Activated CD8-positive, alpha-beta T cell treated with anti-CD3 and anti-CD28 coated beads, Interleukin-2, amount 10 ng/mL, durations not matched to agents 7 days and 5 days (primary cell): ENCODE measurements at regions of chr12 and their contacts with region 1.

Region 1: GRCh38 chr12:49342066-49342913 is 4.4 kb upstream of the DNAJC22 start:
- DNase-seq: peak; percentile 84
- ATAC-seq: peak; percentile 73
- H3K4me3 Mint-ChIP-seq: peak overlapping the region; percentile 34
- H3K27ac Mint-ChIP-seq: no peak overlapping the region
- H3K4me1 Mint-ChIP-seq: peaks cover 39% of the 10 kb centered on the region
- H3K27me3 Mint-ChIP-seq: peaks cover 88% of the 10 kb centered on the region

Region 2: DNA sequence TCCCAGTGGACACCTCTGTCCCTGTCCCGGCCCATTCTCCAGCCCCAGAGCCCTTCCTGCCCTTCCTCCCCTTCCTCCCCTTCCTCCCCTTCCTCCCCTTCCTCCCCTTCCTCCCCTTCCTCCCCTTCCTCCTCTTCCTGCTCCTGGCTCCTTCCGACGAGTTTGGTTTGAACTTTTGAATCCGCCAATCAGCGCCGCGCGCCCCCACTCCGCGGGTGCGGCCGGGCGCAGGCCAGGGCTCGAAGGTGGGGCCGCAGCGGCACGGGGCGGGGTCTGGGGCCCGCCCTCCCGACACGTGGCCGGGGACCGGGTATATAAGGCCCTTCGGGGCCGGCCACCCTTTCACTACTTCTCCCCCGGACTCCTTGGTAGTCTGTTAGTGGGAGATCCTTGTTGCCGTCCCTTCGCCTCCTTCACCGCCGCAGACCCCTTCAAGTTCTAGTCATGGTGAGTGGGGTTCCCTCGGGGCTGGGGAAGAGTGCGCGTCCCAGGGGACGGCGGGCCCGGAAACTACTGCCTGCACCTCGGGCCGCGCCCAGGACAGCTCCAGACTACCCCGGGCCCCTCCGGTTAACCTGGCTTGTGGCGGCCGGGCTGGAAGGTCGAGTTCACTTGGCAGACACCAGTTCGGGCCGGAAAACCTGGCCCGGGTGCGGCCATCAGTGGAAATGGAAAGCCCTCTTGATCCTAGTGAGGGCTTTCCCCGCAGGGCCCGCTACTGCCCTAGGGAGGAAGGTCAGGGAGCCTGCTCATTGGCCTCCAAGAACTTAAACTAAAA is 77.4 kb before region 1 on chr12 and contains the start of gene TUBA1C:
- CTCF ChIA-PET with region 1: interaction called, 18 read pairs
- POLR2A ChIA-PET with region 1: interaction called, 3 read pairs
- DNase-seq: peak; percentile 94
- ATAC-seq: peak; percentile 88
- H3K4me3 Mint-ChIP-seq: peak within 1 kb of the TSS; percentile 99
- H3K27ac Mint-ChIP-seq: peak within 1 kb of the TSS; percentile 99
- H3K4me1 Mint-ChIP-seq: peaks cover 47% of the 10 kb centered on the region
- H3K27me3 Mint-ChIP-seq: no peaks in the 10 kb centered on the region
- total RNA-seq, gene TUBA1C: 308 to 324 TPM

Region 3: DNA sequence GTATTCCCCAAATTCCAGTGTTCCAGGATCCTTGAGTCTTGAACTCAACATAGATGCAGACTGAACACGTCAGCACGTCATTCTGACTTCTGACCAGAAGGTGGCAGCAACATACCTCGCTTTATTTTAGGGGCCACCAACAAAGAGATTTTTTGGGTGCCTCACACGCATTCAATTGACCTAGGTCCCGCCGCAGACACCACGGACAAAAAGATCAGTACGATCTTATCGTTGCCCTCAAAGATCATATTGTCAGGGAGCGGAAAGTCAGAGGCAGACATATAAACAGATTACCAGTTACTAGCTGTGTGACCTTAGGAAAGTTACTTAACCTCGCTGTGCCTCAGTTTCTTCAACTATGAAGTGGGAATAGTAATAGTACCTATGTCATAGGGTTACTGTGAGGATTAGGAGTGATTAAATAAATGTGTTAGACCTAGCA is 53.9 kb before region 1 on chr12:
- CTCF ChIA-PET with region 1: interaction called, 111 read pairs
- POLR2A ChIA-PET with region 1: no interaction called
- DNase-seq: peak; percentile 82
- ATAC-seq: peak; percentile 59
- H3K4me3 Mint-ChIP-seq: no peak overlapping the region
- H3K27ac Mint-ChIP-seq: no peak overlapping the region
- H3K4me1 Mint-ChIP-seq: peaks cover 5% of the 10 kb centered on the region
- H3K27me3 Mint-ChIP-seq: peaks cover 18% of the 10 kb centered on the region

Region 4: DNA sequence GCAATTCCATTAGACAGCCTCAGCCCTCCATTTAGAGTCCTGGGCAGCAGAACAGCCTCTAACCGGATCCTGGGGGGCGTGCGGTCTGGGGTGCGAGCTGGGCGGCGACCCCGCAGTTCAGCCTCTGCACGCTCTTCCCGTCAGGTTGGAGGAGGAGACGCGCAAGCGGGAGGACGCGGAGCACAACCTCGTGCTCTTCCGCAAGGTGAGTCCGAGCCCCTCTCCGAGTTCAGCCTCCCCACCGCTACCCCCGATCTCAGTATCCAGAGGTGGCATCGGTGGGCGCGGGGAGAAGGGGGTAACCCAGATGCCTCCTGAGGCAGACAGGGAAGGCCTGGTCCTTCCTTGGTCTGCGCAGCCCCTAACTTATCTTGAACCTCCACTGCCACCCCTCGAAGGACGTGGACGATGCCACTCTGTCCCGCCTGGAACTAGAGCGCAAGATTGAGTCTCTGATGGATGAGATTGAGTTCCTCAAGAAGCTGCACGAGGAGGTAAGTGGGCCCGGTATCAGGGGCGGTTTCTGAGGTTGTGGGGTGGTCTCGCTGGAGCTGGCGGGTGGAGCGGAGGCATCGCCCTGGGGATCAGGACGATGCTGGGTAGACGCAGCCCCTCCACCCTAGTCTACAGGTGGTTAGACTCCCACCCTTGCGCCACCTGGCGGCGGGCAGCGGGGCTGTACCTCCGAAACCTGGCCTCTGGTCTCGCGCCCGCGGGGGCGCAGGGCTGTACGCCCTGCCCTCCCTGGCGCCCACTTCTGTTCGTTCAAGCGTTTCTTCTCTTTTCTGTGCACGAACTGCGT is 46.1 kb before region 1 on chr12:
- CTCF ChIA-PET with region 1: interaction called, 111 read pairs
- POLR2A ChIA-PET with region 1: interaction called, 3 read pairs
- DNase-seq: peak; percentile 76
- ATAC-seq: peak; percentile 73
- H3K4me3 Mint-ChIP-seq: peak overlapping the region; percentile 63
- H3K27ac Mint-ChIP-seq: no peak overlapping the region
- H3K4me1 Mint-ChIP-seq: peaks cover 22% of the 10 kb centered on the region
- H3K27me3 Mint-ChIP-seq: peaks cover 51% of the 10 kb centered on the region

Region 5: DNA sequence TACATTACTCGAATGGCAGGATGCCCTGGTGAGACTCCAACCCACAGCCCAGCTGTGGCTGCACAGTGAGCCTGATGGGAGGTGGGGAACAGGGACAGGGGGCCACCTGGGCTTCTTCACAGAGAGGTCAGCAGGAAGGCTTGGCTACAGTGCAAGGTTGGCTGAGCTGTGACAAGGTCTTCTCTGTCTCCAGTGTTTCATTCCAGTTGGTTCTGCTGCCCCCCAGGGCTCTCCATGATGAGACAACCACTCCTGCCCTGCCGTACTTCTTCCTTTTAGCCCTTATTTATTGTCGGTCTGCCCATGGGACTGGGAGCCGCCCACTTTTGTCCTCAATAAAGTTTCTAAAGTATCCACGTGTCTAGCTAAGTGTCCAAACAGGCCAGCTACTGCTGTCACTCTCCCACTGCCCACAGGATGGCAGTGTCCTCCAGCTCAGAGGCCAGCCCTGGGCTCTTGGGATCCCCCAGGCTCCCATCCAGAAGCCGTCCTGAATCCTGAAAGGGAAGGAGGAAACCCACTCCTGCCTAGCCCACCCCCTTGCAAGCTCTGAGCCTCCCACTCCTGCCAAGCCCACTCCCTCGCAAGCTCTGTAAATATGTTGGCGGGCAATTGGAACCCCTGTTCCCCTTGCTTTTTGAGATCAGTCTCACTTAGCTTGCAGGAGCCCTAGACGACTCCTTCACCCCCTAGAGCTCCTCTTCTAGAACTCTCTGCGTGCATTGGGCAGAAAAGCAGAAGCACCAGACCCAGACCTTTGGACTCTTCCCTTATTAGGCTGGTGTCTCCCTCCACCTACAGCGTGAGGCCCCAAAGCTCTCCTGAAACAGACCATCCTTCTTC is 10.7 kb before region 1 on chr12:
- CTCF ChIA-PET with region 1: interaction called, 43 read pairs
- POLR2A ChIA-PET with region 1: no interaction called
- DNase-seq: no peak
- ATAC-seq: no peak
- H3K4me3 Mint-ChIP-seq: no peak overlapping the region
- H3K27ac Mint-ChIP-seq: no peak overlapping the region
- H3K4me1 Mint-ChIP-seq: peaks cover 4% of the 10 kb centered on the region
- H3K27me3 Mint-ChIP-seq: peaks cover 27% of the 10 kb centered on the region

Region 6: GRCh38 chr12:49366652-49367380 is 24.5 kb after region 1 on chr12:
- CTCF ChIA-PET with region 1: interaction called, 45 read pairs
- POLR2A ChIA-PET with region 1: interaction called, 12 read pairs
- DNase-seq: peak; percentile 90
- ATAC-seq: peak; percentile 89
- H3K4me3 Mint-ChIP-seq: peak overlapping the region; percentile 97
- H3K27ac Mint-ChIP-seq: peak overlapping the region; percentile 98
- H3K4me1 Mint-ChIP-seq: peaks cover 38% of the 10 kb centered on the region
- H3K27me3 Mint-ChIP-seq: no peaks in the 10 kb centered on the region